ENCODE measurements at regions of chr7 and their contacts with region 1.

Region 1: GRCh38 chr7:152747224-152747623 is 12.3 kb upstream of the ACTR3B start:
- DNase-seq: no peak
- ATAC-seq: no peak
- H3K4me3 ChIP-seq: no peak overlapping the region
- H3K27ac ChIP-seq: no peak overlapping the region
- H3K4me1 ChIP-seq: no peaks in the 10 kb centered on the region
- H3K27me3 ChIP-seq: no peaks in the 10 kb centered on the region
- CTCF ChIP-seq: no peak

Region 2: GRCh38 chr7:152735443-152736004 is 11.7 kb before region 1 on chr7:
- CTCF ChIA-PET with region 1: no interaction called
- POLR2A ChIA-PET with region 1: interaction called, 19 read pairs
- in situ Hi-C with region 1: no loop called
- intact Hi-C with region 1: no loop called
- DNase-seq: no peak
- ATAC-seq: no peak
- H3K4me3 ChIP-seq: no peak overlapping the region
- H3K27ac ChIP-seq: no peak overlapping the region
- H3K4me1 ChIP-seq: no peaks in the 10 kb centered on the region
- H3K27me3 ChIP-seq: no peaks in the 10 kb centered on the region
- CTCF ChIP-seq: no peak

Region 3: GRCh38 chr7:152986376-152986775 is 239.2 kb after region 1 on chr7:
- CTCF ChIA-PET with region 1: no interaction called
- POLR2A ChIA-PET with region 1: no interaction called
- in situ Hi-C with region 1: no loop called
- intact Hi-C with region 1: no loop called
- DNase-seq: no peak
- ATAC-seq: no peak
- H3K4me3 ChIP-seq: no peak overlapping the region
- H3K27ac ChIP-seq: no peak overlapping the region
- H3K4me1 ChIP-seq: no peaks in the 10 kb centered on the region
- H3K27me3 ChIP-seq: no peaks in the 10 kb centered on the region
- CTCF ChIP-seq: no peak

Region 4: DNA sequence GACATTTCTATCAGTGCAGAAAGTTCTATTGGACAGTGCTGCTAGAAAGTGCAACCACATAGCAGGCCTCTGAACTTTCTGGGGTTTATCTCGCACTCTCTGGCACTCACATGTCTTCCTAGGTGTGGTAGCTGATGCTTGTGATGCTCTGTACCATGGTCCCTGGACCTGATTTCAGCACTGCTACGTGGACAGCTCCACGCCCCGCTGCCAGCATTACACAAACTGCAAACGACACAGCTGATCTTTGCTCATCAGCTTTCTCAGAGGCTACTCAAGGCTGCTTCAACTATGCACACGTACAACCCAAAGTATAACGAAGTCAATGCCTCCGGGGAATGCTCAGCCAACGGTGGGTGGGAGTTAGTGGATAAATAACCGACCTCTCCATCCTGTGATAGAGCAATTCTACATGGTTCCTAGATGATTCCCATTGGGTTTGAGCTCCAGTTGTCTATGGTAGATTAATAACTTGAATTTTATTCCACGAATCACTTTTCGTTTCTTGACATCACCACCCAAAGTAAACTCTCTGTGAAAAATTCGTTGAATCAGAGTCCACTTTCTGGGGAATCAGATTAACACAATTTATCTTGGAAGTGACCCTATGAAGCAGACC is 314.8 kb after region 1 on chr7:
- CTCF ChIA-PET with region 1: no interaction called
- POLR2A ChIA-PET with region 1: no interaction called
- in situ Hi-C with region 1: no loop called
- intact Hi-C with region 1: no loop called
- DNase-seq: no peak
- ATAC-seq: no peak
- H3K4me3 ChIP-seq: no peak overlapping the region
- H3K27ac ChIP-seq: no peak overlapping the region
- H3K4me1 ChIP-seq: no peaks in the 10 kb centered on the region
- H3K27me3 ChIP-seq: peaks cover 5% of the 10 kb centered on the region
- CTCF ChIP-seq: no peak